ENCODE measurements at regions of chr6 and their contacts with region 1.

Region 1: GRCh38 chr6:157981395-157982296 is at the start of gene SYNJ2:
- DNase-seq: no peak
- H3K4me3 ChIP-seq: peak within 1 kb of the TSS; percentile 77
- CTCF ChIP-seq: peak; percentile 68

Region 2: GRCh38 chr6:157946865-157947532 is 34.6 kb before region 1 on chr6:
- CTCF ChIA-PET with region 1: no interaction called
- POLR2A ChIA-PET with region 1: no interaction called
- DNase-seq: no peak
- H3K4me3 ChIP-seq: no peak overlapping the region
- CTCF ChIP-seq: peak; percentile 37

Region 3: GRCh38 chr6:157967486-157967885 is 14.2 kb before region 1 on chr6:
- CTCF ChIA-PET with region 1: interaction called, 12 read pairs
- POLR2A ChIA-PET with region 1: interaction called, 3 read pairs
- DNase-seq: no peak
- H3K4me3 ChIP-seq: no peak overlapping the region
- CTCF ChIP-seq: no peak

Region 4: DNA sequence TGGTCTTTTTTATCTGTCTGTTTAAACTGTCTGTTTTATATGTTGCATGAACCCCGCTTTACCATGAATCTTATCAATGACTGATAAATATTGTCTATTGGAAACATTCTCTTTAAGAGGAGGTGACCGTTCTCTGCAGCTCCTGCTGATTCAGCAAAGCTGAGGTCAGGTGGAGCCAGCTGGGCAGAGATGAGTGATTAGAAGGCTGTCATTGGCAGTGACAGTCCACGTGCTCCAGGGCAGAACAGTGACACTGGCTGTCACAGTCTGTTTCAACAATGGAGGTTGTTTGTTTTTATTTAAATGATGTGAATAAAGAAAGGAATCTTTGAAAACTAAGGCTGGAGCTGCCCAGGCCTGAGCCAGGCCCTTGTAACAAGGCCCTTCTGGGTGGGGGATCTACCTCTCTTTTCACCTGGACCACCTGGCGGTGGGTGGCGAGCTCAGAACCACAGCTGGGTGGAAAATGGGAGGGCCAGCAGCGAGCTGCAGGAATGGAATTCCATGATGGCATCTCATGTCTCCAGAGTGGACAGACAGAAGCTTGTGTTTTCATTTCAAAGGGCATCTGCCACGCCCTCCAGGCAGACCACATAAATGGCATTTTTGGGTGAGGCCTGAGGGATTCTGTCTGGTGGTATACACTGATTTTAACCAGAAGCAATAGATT is 12.6 kb after region 1 on chr6:
- CTCF ChIA-PET with region 1: interaction called, 12 read pairs
- POLR2A ChIA-PET with region 1: interaction called, 4 read pairs
- DNase-seq: no peak
- H3K4me3 ChIP-seq: no peak overlapping the region
- CTCF ChIP-seq: no peak

Region 5: GRCh38 chr6:158002951-158003853 is 21.6 kb after region 1 on chr6:
- CTCF ChIA-PET with region 1: interaction called, 19 read pairs
- POLR2A ChIA-PET with region 1: interaction called, 6 read pairs
- DNase-seq: peak; percentile 61
- H3K4me3 ChIP-seq: peak overlapping the region; percentile 20
- CTCF ChIP-seq: no peak

Measured in AG04449 (cell line).